ENCODE measurements at regions of chr11 and their contacts with region 1.

Region 1: GRCh38 chr11:83292709-83293456 is 6.7 kb upstream of the CCDC90B start:
- DNase-seq: peak; percentile 51

Region 2: DNA sequence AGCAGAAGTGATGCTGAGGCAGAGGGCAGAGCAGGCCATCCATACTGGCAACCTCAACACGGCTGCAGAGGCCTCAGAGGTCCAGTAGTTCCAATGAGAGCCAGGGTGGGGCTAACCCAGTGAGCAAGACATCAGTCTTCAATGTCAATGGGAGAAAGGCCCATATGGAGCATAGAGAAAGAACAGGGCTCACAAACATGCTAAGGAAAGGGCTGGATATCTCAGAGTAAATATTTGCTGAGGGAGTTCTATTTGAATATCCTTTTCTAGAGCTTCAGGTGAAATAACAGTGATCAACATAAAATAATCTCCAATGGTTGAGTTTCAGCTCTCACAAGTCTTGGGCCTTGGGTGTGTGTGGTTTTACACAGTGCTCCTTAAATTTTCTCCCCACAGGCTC is 44.1 kb after region 1 on chr11:
- CTCF ChIA-PET with region 1: no interaction called
- POLR2A ChIA-PET with region 1: no interaction called
- DNase-seq: no peak

Region 3: GRCh38 chr11:83724008-83724461 is 431.2 kb after region 1 on chr11:
- CTCF ChIA-PET with region 1: interaction called, 24 read pairs
- POLR2A ChIA-PET with region 1: interaction called, 3 read pairs
- DNase-seq: peak; percentile 12

Measured in HEK293T (cell line).